AG04450 (cell line): ENCODE measurements at regions of chr6 and their contacts with region 1.

Region 1: DNA sequence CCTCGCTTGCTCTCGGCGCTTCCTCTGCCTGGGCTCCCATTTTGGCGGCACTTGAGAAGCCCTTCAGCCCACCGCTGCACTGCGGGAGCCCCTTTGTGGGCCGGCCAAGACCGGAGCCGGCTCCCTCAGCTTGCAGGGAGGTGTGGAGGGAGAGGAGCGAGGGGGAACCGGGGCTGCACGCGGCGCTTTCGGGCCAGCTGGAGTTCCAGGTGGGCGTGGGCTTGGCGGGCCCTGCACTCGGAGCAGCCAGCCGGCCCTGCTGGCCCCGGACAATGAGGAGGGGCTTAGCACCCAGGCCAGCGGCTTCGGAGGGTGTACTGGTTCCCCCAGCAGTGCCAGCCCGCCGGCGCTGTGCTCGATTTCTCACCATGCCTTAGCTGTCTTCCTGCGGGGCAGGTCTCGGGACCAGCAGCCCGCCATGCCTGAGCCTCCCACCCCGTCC is 10.2 kb upstream of the SRPK1 start:
- DNase-seq: no peak
- H3K4me3 ChIP-seq: no peak overlapping the region
- H3K27ac ChIP-seq: no peak overlapping the region
- H3K27me3 ChIP-seq: no peaks in the 10 kb centered on the region
- CTCF ChIP-seq: no peak

Region 2: DNA sequence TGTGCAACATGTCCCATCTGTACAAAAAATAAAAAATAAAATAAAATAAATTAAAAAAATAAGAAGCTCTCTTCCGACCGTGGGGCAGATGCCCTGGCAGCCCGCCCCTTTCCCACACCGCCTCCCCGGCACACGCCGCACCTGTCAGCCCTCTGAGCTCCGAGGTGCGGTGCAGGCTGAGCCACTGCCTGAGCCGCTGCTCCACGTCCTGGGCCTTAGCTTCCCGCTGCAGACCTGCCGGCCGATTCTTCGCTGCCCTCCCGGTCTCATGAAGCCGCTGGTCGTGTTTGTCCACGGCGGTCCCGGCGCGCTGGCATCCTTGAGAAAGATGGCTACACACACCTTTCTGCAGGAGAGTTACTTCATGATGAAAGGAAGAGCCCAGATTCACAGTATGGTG is 165.4 kb before region 1 on chr6:
- CTCF ChIA-PET with region 1: no interaction called
- POLR2A ChIA-PET with region 1: no interaction called
- DNase-seq: no peak
- H3K4me3 ChIP-seq: no peak overlapping the region
- H3K27ac ChIP-seq: no peak overlapping the region
- H3K27me3 ChIP-seq: peaks cover 45% of the 10 kb centered on the region
- CTCF ChIP-seq: no peak

Region 3: GRCh38 chr6:35980991-35981660 is 50.0 kb after region 1 on chr6:
- CTCF ChIA-PET with region 1: no interaction called
- POLR2A ChIA-PET with region 1: interaction called, 10 read pairs
- DNase-seq: no peak
- H3K4me3 ChIP-seq: no peak overlapping the region
- H3K27ac ChIP-seq: no peak overlapping the region
- H3K27me3 ChIP-seq: peaks cover 8% of the 10 kb centered on the region
- CTCF ChIP-seq: no peak

Region 4: GRCh38 chr6:36067374-36068011 is 136.4 kb after region 1 on chr6:
- CTCF ChIA-PET with region 1: no interaction called
- POLR2A ChIA-PET with region 1: no interaction called
- DNase-seq: no peak
- H3K4me3 ChIP-seq: no peak overlapping the region
- H3K27ac ChIP-seq: no peak overlapping the region
- H3K27me3 ChIP-seq: no peaks in the 10 kb centered on the region
- CTCF ChIP-seq: no peak

Region 5: GRCh38 chr6:36285187-36285671 is 354.1 kb after region 1 on chr6:
- CTCF ChIA-PET with region 1: no interaction called
- POLR2A ChIA-PET with region 1: no interaction called
- DNase-seq: no peak
- H3K4me3 ChIP-seq: no peak overlapping the region
- H3K27ac ChIP-seq: no peak overlapping the region
- H3K27me3 ChIP-seq: peaks cover 45% of the 10 kb centered on the region
- CTCF ChIP-seq: no peak